Testis (tissue), 5 donors: ENCODE measurements at regions of chr6 and their contacts with region 1.

Region 1: GRCh38 chr6:122372647-122373046 is 26.8 kb upstream of the HSF2 start:
- DNase-seq: no peak
- H3K4me3 ChIP-seq: no peak overlapping the region
- H3K27ac ChIP-seq: no peak overlapping the region
- H3K4me1 ChIP-seq: no peaks in the 10 kb centered on the region
- H3K27me3 ChIP-seq: no peaks in the 10 kb centered on the region
- CTCF ChIP-seq: no peak
- POLR2A ChIP-seq: no peak

Region 2: GRCh38 chr6:122530440-122531046 is 157.9 kb after region 1 on chr6:
- intact Hi-C with region 1: loop called (anchors 10 kb)
- DNase-seq: peak; percentile 75
- H3K4me3 ChIP-seq: no peak overlapping the region
- H3K27ac ChIP-seq: no peak overlapping the region
- H3K4me1 ChIP-seq: no peaks in the 10 kb centered on the region
- H3K27me3 ChIP-seq: no peaks in the 10 kb centered on the region
- CTCF ChIP-seq: peak; percentile 69 to 75 (median 72)
- POLR2A ChIP-seq: no peak